ENCODE measurements at regions of chr2 and their contacts with region 1.

Region 1: DNA sequence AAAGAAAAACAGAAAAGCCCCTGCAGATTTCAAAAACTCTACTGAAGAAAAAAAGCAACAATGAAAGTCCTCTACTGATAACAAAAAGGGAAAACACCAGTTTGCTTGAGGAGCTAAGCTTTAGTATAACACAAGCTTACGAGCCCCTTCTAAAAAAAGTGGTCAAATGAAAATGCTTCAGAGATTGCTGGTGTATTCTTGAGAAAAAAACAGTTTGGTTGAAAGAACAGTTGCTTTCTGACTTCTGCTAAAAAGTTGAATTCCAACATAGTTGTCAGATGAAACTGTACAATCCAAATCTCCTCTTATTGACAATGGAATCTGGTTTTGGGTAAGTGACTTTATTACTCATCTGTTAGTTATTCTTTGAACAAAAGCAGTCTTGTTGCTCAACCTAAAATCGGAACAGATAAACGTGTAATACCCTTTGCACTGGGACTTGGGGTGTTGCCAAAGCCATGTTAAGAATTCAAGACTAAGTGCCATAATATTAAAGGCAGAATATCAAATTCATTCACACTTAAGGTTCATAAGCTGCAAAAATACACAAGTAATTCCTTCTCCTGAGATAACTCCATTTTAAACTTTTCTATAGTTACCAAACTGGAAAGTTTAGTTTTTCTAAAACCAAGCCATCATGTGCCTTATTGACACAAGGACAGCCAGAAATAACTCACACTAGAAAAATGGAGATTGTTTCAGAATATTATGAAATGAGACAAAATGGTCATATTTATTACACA is 45.3 kb upstream of the SPAG16 start:
- DNase-seq: peak; percentile 86
- ATAC-seq: peak; percentile 75
- H3K4me3 ChIP-seq: no peak overlapping the region
- H3K27ac ChIP-seq: peak overlapping the region; percentile 77; the same call in 1 of the 2 replicates
- H3K4me1 ChIP-seq: peaks cover 8% of the 10 kb centered on the region
- H3K27me3 ChIP-seq: no peaks in the 10 kb centered on the region
- CTCF ChIP-seq: no peak
- POLR2A ChIP-seq: no peak
- RAD21 ChIP-seq: no peak

Region 2: DNA sequence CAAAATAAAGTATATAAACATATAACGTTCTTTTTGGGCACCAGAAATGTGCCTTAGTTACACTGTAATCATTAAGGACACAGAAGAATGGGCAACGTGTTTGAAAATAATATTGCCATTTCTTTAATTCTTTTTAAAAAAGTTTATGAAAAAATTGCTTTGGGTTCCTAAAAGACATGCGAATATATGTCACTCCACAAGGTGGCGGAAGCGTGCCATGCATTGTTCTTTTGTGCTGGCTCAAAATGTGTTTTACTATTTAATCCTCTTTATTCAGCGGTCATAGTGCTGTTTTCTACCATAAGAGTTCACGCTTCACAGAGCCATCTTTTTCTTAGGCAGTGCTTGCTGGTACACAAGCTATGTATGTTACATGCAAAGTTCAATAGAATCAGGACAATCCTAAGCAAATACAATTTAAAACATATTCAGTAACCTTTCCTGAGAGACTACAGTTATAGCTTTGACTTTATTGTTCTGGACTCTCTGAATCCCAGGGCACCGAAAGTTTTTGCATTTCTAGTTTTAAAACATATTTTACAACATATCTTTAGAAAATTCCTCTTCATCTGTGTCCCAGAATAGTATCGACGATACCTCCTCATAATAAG is 552.5 kb before region 1 on chr2:
- CTCF ChIA-PET with region 1: no interaction called
- POLR2A ChIA-PET with region 1: no interaction called
- dilution Hi-C with region 1: no loop called
- in situ Hi-C with region 1: loop called (anchors 10 kb)
- intact Hi-C with region 1: loop called (anchors 2 kb)
- DNase-seq: peak; percentile 73
- ATAC-seq: peak; percentile 82
- H3K4me3 ChIP-seq: no peak overlapping the region
- H3K27ac ChIP-seq: no peak overlapping the region
- H3K4me1 ChIP-seq: peaks cover 3% of the 10 kb centered on the region
- H3K27me3 ChIP-seq: no peaks in the 10 kb centered on the region
- CTCF ChIP-seq: peak; percentile 97
- POLR2A ChIP-seq: 0 out of 2 replicates have a peak, but pooled peaks have one; percentile 34
- RAD21 ChIP-seq: peak; percentile 94

Region 3: GRCh38 chr2:212832211-212833195 is 406.4 kb before region 1 on chr2:
- CTCF ChIA-PET with region 1: no interaction called
- POLR2A ChIA-PET with region 1: no interaction called
- dilution Hi-C with region 1: no loop called
- in situ Hi-C with region 1: no loop called
- intact Hi-C with region 1: no loop called
- DNase-seq: no peak
- ATAC-seq: no peak
- H3K4me3 ChIP-seq: no peak overlapping the region
- H3K27ac ChIP-seq: no peak overlapping the region
- H3K4me1 ChIP-seq: no peaks in the 10 kb centered on the region
- H3K27me3 ChIP-seq: no peaks in the 10 kb centered on the region
- CTCF ChIP-seq: no peak
- POLR2A ChIP-seq: no peak
- RAD21 ChIP-seq: no peak

Region 4: DNA sequence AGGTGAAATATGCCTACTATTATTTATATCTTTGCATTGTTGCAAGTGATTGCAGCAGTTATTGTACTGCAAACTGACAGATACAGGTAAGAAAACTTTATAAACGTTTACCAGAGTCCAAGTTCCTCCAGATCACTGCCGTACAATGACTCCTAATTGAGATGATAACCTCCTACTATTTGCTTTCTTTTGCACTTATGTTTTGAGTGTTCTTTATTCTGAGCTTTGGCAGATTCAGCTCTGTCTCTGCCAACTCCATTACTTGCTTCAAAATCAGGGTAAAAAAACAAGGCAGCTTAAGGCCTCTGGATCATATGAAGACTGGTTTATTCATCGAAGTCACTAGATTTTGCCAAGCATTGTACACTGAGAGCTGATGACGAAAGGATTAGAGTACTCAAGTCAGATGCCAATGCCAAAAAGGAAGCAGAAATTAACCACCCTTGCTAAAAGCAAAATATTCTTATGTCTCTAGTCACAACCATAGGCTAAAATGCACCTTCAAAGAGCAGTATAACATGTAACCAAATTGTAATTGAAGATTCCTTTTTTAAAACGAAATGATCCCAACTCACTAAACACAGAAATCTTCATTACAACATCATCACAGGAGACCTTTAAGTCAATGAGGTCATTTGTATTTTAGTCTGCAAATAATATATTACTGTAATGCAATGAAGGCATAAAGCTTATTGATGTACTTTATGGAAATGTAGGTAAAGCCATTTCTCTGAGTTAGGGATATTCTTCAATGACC is 77.0 kb before region 1 on chr2:
- CTCF ChIA-PET with region 1: no interaction called
- POLR2A ChIA-PET with region 1: no interaction called
- dilution Hi-C with region 1: no loop called
- in situ Hi-C with region 1: no loop called
- intact Hi-C with region 1: loop called (anchors 2 kb)
- DNase-seq: peak; percentile 76
- ATAC-seq: peak; percentile 48
- H3K4me3 ChIP-seq: no peak overlapping the region
- H3K27ac ChIP-seq: peak overlapping the region; percentile 81
- H3K4me1 ChIP-seq: peaks cover 5% of the 10 kb centered on the region
- H3K27me3 ChIP-seq: no peaks in the 10 kb centered on the region
- CTCF ChIP-seq: no peak
- POLR2A ChIP-seq: no peak
- RAD21 ChIP-seq: no peak

Region 5: GRCh38 chr2:213189001-213189899 is 49.7 kb before region 1 on chr2:
- CTCF ChIA-PET with region 1: no interaction called
- POLR2A ChIA-PET with region 1: no interaction called
- dilution Hi-C with region 1: no loop called
- in situ Hi-C with region 1: no loop called
- intact Hi-C with region 1: loop called (anchors 2 kb)
- DNase-seq: peak; percentile 52
- ATAC-seq: peak; percentile 56
- H3K4me3 ChIP-seq: no peak overlapping the region
- H3K27ac ChIP-seq: peak overlapping the region; percentile 65
- H3K4me1 ChIP-seq: peaks cover 5% of the 10 kb centered on the region; the same call in 1 of the 2 replicates
- H3K27me3 ChIP-seq: no peaks in the 10 kb centered on the region
- CTCF ChIP-seq: no peak
- POLR2A ChIP-seq: no peak
- RAD21 ChIP-seq: no peak

Region 6: DNA sequence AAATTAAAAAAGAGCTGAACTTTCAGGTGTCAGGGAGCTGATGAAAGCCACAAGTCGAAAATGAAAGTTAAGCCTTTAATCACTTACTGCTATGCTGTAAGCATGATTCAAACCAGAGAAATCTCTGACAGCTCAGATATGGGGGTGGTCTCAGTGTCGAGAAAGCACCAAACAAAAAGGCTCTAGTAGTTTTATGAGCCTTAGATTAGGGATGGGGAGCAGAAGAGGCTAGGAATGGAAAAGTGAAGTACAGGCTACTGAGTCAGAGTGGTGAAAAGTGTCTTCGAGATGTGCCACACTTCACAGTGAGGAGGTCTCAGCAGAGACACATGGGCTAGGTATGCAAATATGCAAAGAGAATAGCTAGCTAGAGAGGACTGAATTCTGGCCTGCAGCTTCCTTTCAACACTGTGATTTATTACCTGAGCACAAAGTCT is 527.6 kb after region 1 on chr2:
- CTCF ChIA-PET with region 1: no interaction called
- POLR2A ChIA-PET with region 1: no interaction called
- dilution Hi-C with region 1: no loop called
- in situ Hi-C with region 1: no loop called
- intact Hi-C with region 1: no loop called
- DNase-seq: no peak
- ATAC-seq: peak; percentile 67; the same call in 1 of the 2 replicates
- H3K4me3 ChIP-seq: no peak overlapping the region
- H3K27ac ChIP-seq: no peak overlapping the region
- H3K4me1 ChIP-seq: no peaks in the 10 kb centered on the region
- H3K27me3 ChIP-seq: no peaks in the 10 kb centered on the region
- CTCF ChIP-seq: no peak
- POLR2A ChIP-seq: no peak
- RAD21 ChIP-seq: no peak